OCI-LY7 (cell line): ENCODE measurements at regions of chr10 and their contacts with region 1.

Region 1: DNA sequence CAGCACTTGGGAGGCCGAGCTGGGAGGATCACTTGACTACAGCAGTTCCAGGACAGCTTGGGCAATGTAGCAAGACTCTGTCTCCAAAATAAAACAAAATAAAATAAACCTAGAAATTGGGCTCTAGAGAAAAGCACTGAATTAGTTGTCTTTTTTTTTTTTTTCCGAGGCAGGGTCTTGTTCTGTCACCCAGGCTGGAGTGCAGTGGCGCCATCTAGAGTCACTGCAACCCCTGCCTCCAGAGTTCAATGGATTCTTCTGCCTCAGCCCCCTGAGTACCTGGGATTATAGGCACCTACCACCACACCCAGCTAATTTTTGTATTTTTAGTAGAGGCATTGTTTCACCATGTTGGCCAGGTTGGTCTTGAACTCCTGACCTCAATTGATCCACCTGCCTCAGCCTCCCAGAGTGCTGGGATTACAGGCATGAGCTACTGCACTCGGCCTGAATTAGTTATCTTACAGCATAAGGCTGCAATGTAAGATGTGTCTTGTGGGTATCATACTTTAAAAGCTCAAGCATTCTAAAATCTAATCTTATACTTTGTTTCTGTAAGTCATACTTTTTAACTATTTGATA is 12.8 kb downstream of the MEIG1 start:
- DNase-seq: peak; percentile 65
- H3K4me3 ChIP-seq: no peak overlapping the region
- H3K27ac ChIP-seq: no peak overlapping the region
- H3K4me1 ChIP-seq: no peaks in the 10 kb centered on the region
- CTCF ChIP-seq: peak; percentile 93

Region 2: DNA sequence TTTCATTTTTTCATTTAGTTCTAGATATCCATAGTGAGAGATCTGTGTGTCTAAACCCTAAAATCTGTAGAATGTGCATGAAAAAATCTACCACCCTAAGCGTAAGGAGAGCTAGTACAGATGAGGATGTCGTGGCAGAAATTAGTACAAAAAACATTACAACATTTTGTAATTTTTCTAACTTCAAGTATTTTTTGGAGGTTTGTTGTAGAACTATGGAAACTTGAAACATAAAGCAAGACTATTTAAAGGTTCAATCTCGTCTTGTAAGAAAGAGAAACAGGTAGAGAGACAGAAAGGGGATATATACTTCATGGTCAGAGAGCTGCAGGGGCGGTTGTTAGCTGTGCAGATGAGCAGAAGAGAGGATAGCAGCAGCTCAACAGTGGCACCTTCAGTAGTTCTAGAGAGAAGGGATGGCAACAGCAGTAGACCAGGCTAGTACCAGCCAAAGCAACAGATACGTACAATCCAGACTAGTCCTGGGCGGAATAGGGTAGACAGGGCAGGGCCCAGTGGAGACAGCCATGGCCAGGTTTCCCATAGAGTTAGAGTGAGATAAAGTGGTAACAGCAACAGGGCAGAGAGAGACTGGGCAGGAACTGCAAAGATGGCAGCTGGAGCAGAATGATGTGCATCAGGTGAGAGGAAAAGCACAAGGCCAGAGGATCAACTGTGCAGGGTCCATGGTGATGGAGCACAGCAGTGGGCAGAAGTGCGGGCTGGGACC is 786.5 kb before region 1 on chr10:
- CTCF ChIA-PET with region 1: no interaction called
- POLR2A ChIA-PET with region 1: no interaction called
- intact Hi-C with region 1: loop called (anchors 10 kb)
- DNase-seq: peak; percentile 64
- H3K4me3 ChIP-seq: peak overlapping the region; percentile 35
- H3K27ac ChIP-seq: peak overlapping the region; percentile 48
- H3K4me1 ChIP-seq: peaks cover 25% of the 10 kb centered on the region
- CTCF ChIP-seq: no peak

Region 3: GRCh38 chr10:14499601-14499904 is 472.4 kb before region 1 on chr10:
- CTCF ChIA-PET with region 1: no interaction called
- POLR2A ChIA-PET with region 1: no interaction called
- intact Hi-C with region 1: loop called (anchors 2 kb)
- DNase-seq: no peak
- H3K4me3 ChIP-seq: no peak overlapping the region
- H3K27ac ChIP-seq: no peak overlapping the region
- H3K4me1 ChIP-seq: peaks cover 23% of the 10 kb centered on the region
- CTCF ChIP-seq: no peak

Region 4: GRCh38 chr10:14837757-14838581 is 134.0 kb before region 1 on chr10 and contains the starts of genes CDNF, HSPA14 and MSANTD7:
- CTCF ChIA-PET with region 1: interaction called, 4 read pairs
- POLR2A ChIA-PET with region 1: interaction called, 3 read pairs
- intact Hi-C with region 1: loop called (anchors 5 kb)
- DNase-seq: peak; percentile 100
- H3K4me3 ChIP-seq: peak within 1 kb of the TSS; percentile 88
- H3K27ac ChIP-seq: peak within 1 kb of the TSS; percentile 56
- H3K4me1 ChIP-seq: peaks cover 12% of the 10 kb centered on the region
- CTCF ChIP-seq: no peak
- total RNA-seq, gene CDNF: 0.72 and 3.2 TPM in 2 replicates
- total RNA-seq, gene HSPA14: 21.8 and 29.4 TPM in 2 replicates
- total RNA-seq, gene MSANTD7: 22.2 and 26.5 TPM in 2 replicates

Region 5: DNA sequence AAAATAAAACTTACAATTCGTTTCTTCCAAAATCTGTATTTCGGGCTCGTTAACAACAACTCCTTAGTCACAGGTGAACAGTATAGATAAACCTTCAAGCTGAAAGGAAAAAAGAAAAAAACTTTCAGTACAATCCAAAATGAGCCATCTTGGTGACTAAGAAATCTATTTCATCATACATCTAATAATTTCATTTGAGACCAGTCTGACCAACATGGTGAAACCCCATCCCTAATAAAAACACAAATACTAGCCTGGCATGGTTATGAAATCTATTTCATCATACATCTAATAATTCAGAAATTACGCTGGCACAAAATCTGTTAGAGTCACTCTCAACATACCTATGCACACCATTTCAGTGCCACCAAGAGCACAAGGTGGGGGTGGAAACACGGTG is 26.9 kb before region 1 on chr10:
- CTCF ChIA-PET with region 1: no interaction called
- POLR2A ChIA-PET with region 1: no interaction called
- intact Hi-C with region 1: no loop called
- DNase-seq: no peak
- H3K4me3 ChIP-seq: no peak overlapping the region
- H3K27ac ChIP-seq: no peak overlapping the region
- H3K4me1 ChIP-seq: peaks cover 13% of the 10 kb centered on the region
- CTCF ChIP-seq: no peak

Region 6: GRCh38 chr10:15035385-15036301 is 63.7 kb after region 1 on chr10:
- CTCF ChIA-PET with region 1: no interaction called
- POLR2A ChIA-PET with region 1: no interaction called
- intact Hi-C with region 1: no loop called
- DNase-seq: no peak
- H3K4me3 ChIP-seq: no peak overlapping the region
- H3K27ac ChIP-seq: no peak overlapping the region
- H3K4me1 ChIP-seq: no peaks in the 10 kb centered on the region
- CTCF ChIP-seq: no peak

Region 7: GRCh38 chr10:15106352-15107013 is 134.5 kb after region 1 on chr10:
- CTCF ChIA-PET with region 1: no interaction called
- POLR2A ChIA-PET with region 1: interaction called, 3 read pairs
- intact Hi-C with region 1: loop called (anchors 5 kb)
- DNase-seq: peak; percentile 63
- H3K4me3 ChIP-seq: no peak overlapping the region
- H3K27ac ChIP-seq: no peak overlapping the region
- H3K4me1 ChIP-seq: no peaks in the 10 kb centered on the region
- CTCF ChIP-seq: peak; percentile 99

Region 8: DNA sequence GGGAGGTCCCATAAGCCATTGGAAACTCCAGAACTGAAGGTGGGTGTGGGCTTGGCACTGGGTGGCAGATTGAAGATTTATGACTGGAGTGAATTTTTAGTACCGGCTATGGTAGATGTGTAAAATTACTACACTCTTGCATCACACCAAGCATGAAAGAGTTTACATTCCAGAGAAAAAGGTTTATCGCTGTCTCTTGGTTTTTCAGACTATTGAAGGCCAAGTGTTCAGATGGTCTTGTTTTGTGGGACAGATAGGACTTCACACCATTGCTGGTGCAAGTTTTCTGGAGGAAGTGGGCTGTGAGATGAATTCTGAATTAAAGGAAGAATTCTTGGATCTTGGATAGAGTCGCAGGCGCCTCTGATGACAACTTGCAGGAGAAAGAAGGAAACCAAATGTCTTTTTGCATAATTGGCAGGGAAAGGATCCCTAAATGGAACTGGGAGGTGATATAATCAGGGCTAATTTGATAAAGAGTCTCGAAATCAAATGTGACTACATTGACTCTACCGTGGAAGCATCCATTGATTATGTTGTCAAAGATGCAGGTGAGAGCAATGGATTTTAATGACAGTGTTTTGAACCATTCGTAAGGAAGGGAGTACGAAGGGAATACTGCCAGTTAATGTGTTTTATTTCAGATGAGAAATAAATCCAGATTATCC is 210.7 kb after region 1 on chr10:
- CTCF ChIA-PET with region 1: no interaction called
- POLR2A ChIA-PET with region 1: no interaction called
- intact Hi-C with region 1: no loop called
- DNase-seq: no peak
- H3K4me3 ChIP-seq: no peak overlapping the region
- H3K27ac ChIP-seq: no peak overlapping the region
- H3K4me1 ChIP-seq: no peaks in the 10 kb centered on the region
- CTCF ChIP-seq: no peak